Mammary epithelial cell (primary cell): ENCODE measurements at regions of chr4 and their contacts with region 1.

Region 1: GRCh38 chr4:80365928-80366327 is 30.4 kb downstream of the CFAP299 start:
- DNase-seq: peak; percentile 64
- H3K4me3 ChIP-seq: no peak overlapping the region
- H3K27ac ChIP-seq: no peak overlapping the region
- H3K4me1 ChIP-seq: no peaks in the 10 kb centered on the region
- H3K27me3 ChIP-seq: no peaks in the 10 kb centered on the region
- CTCF ChIP-seq: peak; percentile 81 to 93

Region 2: DNA sequence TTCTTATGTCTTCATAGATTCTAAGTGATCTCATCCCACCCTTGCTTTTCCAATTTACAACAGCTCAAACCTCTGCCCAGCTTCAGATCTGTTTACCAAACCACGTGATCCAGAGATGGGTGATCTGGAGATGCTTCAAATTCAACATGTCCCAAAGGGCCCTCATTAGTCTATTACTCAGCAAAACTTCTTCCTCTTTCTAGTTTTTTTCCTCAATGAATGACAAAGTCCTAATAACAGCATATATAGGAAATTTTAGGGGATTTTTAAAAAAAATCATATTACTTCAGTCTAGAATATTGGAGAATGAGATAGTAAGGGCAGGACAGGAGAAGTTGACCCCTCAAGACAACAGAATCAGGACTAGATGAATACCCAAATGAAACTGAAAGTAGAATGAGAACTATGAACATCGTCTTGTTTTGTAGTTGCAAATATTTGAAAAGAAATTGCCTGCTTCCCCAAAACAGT is 96.7 kb after region 1 on chr4:
- CTCF ChIA-PET with region 1: no interaction called
- dilution Hi-C with region 1: no loop called
- in situ Hi-C with region 1: no loop called
- intact Hi-C with region 1: loop called (anchors 5 kb)
- DNase-seq: no peak
- H3K4me3 ChIP-seq: no peak overlapping the region
- H3K27ac ChIP-seq: no peak overlapping the region
- H3K4me1 ChIP-seq: peaks cover 14% of the 10 kb centered on the region
- H3K27me3 ChIP-seq: no peaks in the 10 kb centered on the region
- CTCF ChIP-seq: no peak

Region 3: GRCh38 chr4:80619070-80619674 is 253.2 kb after region 1 on chr4:
- CTCF ChIA-PET with region 1: no interaction called
- dilution Hi-C with region 1: no loop called
- in situ Hi-C with region 1: loop called in 1 of 2 experiments (anchors 10 kb)
- intact Hi-C with region 1: loop called (anchors 2 kb)
- DNase-seq: peak; percentile 1
- H3K4me3 ChIP-seq: no peak overlapping the region
- H3K27ac ChIP-seq: no peak overlapping the region
- H3K4me1 ChIP-seq: no peaks in the 10 kb centered on the region
- H3K27me3 ChIP-seq: peaks cover 4% of the 10 kb centered on the region
- CTCF ChIP-seq: peak; percentile 22 to 59

Region 4: DNA sequence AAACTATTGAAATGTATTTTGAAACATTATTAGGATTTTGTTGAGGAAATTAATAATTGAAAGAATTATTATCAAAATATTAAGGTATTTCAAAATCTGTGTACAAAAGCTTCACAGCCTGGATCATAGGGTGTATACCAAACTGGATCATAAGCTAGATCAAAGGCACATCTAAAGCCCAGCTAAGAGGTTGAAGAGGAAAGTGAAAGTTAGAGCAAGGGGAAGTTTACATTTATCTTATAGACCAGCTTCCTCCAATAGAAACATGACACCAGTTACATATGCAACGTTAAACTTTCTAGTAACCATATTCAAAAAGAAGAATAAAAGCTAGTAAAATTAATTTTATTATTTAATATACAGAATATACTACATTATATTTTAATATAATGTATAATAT is 437.4 kb after region 1 on chr4:
- CTCF ChIA-PET with region 1: no interaction called
- dilution Hi-C with region 1: no loop called
- in situ Hi-C with region 1: loop called in 1 of 2 experiments (anchors 25 kb)
- intact Hi-C with region 1: no loop called
- DNase-seq: no peak
- H3K4me3 ChIP-seq: no peak overlapping the region
- H3K27ac ChIP-seq: no peak overlapping the region
- H3K4me1 ChIP-seq: no peaks in the 10 kb centered on the region
- H3K27me3 ChIP-seq: no peaks in the 10 kb centered on the region
- CTCF ChIP-seq: no peak

Region 5: GRCh38 chr4:81030061-81030980 is 664.4 kb after region 1 on chr4 and contains the start of gene BMP3:
- CTCF ChIA-PET with region 1: no interaction called
- dilution Hi-C with region 1: loop called (anchors 25 kb)
- in situ Hi-C with region 1: loop called in 1 of 2 experiments (anchors 10 kb)
- intact Hi-C with region 1: no loop called
- DNase-seq: no peak
- H3K4me3 ChIP-seq: peak within 1 kb of the TSS in 2 of 3 experiments; percentile 3 to 6
- H3K27ac ChIP-seq: no peak within 1 kb of the TSS
- H3K4me1 ChIP-seq: peaks cover 6% of the 10 kb centered on the region
- H3K27me3 ChIP-seq: peaks cover 26% of the 10 kb centered on the region
- CTCF ChIP-seq: no peak
- total RNA-seq, gene BMP3: under 0.01 TPM in 1 of 2 donors, not detected in the other

Region 6: DNA sequence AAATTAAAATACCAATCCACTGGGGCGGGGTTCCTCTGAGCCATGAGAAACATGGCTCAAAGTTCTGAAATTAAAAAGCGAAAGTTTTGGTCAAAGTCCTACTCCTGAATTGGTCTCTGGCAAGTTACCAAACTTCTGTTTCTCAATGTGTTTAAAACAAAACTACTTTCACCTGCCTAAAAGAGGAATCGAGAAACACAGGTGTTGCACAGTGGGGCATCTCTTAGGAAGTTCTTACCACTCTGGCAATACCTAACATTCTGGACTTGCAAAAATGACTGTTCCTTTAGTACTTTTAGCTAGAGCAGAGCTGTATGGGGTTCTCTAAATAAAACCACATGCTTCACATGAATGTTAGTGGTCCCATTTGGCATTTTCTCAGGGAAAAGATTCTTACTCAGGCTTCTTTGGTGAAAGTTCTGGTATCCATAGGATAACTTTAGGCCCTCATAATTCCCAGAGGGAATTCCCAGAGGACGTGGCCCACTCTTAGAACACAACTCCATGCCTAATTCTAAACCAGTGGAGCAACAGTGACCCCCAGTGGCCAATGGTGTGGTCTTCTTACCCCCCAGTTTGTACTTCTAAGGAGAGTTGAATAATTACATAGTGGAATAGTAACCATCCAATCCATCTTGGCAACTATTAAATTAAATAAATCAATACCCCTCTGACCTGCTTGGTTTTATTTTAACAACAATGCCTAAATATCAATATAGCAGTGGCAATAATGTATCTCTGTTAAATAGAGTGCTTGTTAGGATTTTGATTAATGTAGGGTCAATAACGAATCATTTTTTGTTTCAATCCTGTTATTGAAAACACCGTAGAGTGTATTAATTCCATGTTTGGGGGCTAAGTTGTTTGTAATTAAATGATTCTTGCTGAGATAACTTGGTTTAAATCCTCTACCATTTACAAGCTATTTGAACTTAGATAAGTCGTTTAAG is 686.5 kb after region 1 on chr4:
- CTCF ChIA-PET with region 1: interaction called, 3 read pairs
- dilution Hi-C with region 1: loop called (anchors 25 kb)
- in situ Hi-C with region 1: no loop called
- intact Hi-C with region 1: loop called (anchors 1 kb)
- DNase-seq: peak; percentile 26
- H3K4me3 ChIP-seq: no peak overlapping the region
- H3K27ac ChIP-seq: no peak overlapping the region
- H3K4me1 ChIP-seq: no peaks in the 10 kb centered on the region
- H3K27me3 ChIP-seq: peaks cover 6% of the 10 kb centered on the region
- CTCF ChIP-seq: peak; percentile 62 to 65